ENCODE measurements at regions of chr5 and their contacts with region 1.

Region 1: DNA sequence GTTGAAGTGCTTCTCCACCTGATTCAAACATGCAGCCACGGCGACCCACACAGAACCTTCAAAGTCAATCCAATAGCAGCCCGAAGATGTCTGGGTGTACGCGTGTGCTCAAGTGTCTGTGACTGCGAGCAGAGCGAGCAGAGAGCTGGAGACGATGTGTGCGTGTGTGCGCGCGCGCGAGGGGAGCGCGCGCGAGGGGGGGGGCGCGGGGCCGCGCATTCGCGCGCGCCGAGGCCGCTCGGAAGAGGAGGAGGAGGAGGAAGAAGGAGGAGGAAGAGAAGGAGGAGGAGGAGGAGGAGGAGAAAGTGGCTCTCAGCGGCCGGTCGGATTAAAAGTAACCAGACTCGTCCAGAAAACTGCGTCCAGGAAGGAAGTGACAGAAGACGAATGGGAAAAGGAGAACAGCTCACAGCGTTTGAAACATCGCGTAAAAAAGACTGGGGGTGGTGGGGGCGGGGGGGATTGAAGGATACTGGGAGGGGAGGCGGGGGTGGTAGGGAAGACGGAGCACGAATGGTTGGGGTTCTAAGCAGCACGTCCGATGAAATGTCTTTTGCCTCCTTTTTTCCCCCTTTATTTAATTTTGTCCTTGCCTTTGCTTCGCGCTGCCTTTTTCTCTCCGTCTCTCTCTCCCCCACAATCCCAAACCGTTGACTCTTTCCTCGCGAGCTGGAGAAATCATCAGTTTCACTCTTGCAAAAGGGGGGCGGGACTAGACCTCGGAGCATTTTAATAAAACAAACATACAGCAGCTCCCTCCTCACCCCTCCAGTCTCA is at the start of gene MEF2C:
- DNase-seq: peak; percentile 91
- H3K4me3 ChIP-seq: peak within 1 kb of the TSS; percentile 52 to 87 (median 66)
- H3K27ac ChIP-seq: peak within 1 kb of the TSS; percentile 86 to 94 (median 92)
- H3K4me1 ChIP-seq: peaks cover 16 to 80% (median 51%) of the 10 kb centered on the region in 6 donors
- H3K27me3 ChIP-seq: no peaks in the 10 kb centered on the region
- CTCF ChIP-seq: no peak
- POLR2A ChIP-seq: peak; percentile 43 to 97 (median 75)
- total RNA-seq, gene MEF2C: 94.4 to 153 (median 129) TPM

Region 2: DNA sequence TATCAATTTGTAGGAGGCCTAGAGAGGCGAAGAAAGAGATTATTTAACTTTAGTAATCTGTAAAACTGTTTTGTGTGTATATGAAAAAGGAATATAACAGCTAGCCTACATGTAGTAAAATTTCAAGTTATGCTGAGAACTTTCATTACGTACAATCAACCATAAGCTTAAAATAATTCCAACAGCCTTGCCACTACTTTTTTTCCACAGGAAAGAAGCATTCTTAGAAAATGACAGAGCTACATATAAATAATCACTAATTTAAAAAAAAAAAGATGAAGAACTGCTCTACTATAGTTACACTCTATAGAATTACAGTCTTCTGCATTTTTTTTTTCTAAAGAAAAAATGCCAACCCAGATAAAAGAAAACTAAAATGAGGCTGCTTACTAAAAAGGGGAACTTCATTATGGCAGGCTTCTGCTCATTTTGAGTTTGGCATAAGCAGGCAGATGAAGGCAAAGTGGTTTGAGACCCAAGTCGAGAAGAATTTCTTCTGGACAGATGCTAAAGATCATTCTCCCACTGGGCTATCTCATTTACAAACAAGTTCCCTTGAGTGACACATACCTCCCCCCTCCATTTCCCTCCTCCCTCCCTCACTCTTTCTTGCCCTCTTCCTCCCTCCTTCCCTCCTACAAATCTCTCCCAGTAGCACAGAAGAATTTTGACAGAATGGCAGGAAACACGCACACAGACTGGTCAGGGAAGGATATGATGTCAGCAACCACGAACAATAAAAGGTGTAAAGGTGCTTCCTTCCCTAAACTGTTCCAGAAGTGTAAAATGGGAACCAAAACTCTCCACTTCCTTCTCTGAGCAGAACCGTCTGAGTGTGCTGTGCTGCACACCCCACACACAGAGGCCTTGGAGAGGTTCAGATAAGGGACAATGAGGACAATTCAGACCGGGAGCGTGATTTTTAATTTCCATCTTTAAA is 56.3 kb before region 1 on chr5:
- intact Hi-C with region 1: loop called (anchors 10 kb)
- DNase-seq: peak; percentile 79
- H3K4me3 ChIP-seq: peak overlapping the region in 4 of 8 donors; percentile 4 to 57 (median 9)
- H3K27ac ChIP-seq: peak overlapping the region; percentile 64 to 91 (median 84)
- H3K4me1 ChIP-seq: peaks cover 32 to 100% (median 85%) of the 10 kb centered on the region in 6 donors
- H3K27me3 ChIP-seq: no peaks in the 10 kb centered on the region
- CTCF ChIP-seq: no peak
- POLR2A ChIP-seq: peak in 1 of 3 donors; percentile 71

Measured in spleen (tissue), 13 donors.